Dorsolateral prefrontal cortex (tissue), 120 donors: ENCODE measurements at regions of chr11 and their contacts with region 1.

Region 1: GRCh38 chr11:123110356-123110755 is 48.4 kb upstream of the HSPA8 start:
- DNase-seq: no peak
- H3K4me3 ChIP-seq: no peak overlapping the region
- H3K27ac ChIP-seq: no peak overlapping the region
- H3K27me3 ChIP-seq: peaks cover 0 to 8% (median 0%) of the 10 kb centered on the region in 45 donors
- CTCF ChIP-seq: no peak

Region 2: DNA sequence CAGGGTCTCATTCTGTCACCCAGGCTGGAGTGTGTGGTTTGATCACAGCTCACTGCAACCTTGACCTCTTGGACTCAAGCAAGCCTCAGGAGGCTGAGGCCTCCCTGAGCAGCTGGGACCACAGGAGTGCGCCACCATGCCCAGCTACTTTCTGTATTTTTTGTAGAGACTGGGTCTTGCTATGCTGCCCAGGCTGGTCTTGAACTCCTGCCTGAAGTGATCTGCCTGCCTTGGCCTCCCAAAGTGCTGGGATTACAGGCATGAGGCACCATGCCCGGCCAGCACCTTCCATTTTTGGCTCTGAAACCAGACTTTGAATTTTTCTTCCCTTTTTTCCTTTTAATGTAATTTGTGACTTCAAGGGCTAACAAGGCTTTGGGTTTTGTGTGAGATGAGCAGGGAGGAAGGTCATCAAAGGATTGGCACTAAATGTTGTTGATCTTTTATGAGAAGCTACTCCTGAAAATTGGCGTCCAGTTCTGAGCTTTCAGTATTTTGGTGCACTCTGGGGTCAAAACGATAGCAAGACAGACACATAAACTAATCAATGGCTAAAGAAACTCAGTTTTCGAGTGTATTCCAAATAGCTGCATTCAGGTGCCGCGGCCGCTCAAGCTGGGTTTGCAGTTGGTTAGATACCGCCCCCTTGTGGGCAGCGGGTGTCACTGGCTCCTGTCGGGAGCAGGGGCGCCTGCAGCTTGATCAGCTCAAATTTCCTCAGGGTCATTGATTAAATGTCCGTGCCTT is 136.6 kb after region 1 on chr11:
- intact Hi-C with region 1: loop called (anchors 2 to 5 kb)
- DNase-seq: peak; percentile 71 to 89 (median 80)
- H3K4me3 ChIP-seq: peak overlapping the region in 8 of 59 donors; percentile 1 to 40 (median 17)
- H3K27ac ChIP-seq: no peak overlapping the region
- H3K27me3 ChIP-seq: peaks cover 0 to 8% (median 0%) of the 10 kb centered on the region in 45 donors
- CTCF ChIP-seq: peak; percentile 79 to 100 (median 98)

Region 3: DNA sequence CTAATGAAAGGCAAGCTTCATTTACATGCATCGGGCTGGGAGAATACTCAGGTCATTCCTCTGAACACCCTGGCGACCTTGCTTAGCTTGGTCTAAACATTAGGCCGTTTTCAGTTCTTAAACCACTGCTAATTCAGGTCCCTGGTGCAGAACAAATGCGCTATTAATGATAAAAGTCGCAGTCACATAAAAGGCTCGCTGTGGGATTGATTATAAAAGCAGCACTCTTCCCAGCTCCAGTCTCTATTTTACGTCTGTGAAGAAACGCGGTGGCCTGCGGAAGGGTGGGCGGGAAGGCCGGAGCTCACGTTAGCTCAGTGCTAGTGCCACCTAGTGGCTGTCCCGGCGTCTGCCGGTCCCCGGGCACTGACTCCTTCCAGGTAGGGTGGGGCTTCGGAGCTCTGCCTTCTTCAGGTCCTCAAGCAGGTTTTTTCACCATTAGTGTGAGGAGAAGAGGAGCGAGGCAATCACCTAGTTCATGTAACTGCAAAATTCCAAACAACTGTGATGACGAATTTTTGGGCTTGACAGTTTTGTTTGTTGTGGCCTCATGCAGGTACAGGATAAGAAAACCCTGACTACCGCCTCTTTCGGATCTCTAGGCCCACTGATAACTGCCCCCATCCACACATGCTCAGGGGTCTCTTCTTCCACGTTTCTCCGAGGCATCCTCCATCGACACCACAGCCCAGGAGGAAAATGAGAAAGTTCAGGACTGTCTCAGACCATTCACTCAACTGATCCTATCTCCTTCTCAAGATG is 151.2 kb after region 1 on chr11:
- intact Hi-C with region 1: loop called in 1 of 2 experiments (anchors 5 kb)
- DNase-seq: peak; percentile 66 to 94 (median 82)
- H3K4me3 ChIP-seq: peak overlapping the region in 47 of 59 donors; percentile 9 to 60 (median 38)
- H3K27ac ChIP-seq: peak overlapping the region in 12 of 59 donors; percentile 1 to 56 (median 20)
- H3K27me3 ChIP-seq: peaks cover 0 to 8% (median 0%) of the 10 kb centered on the region in 45 donors
- CTCF ChIP-seq: peak in 55 of 56 donors; percentile 70 to 95 (median 89)

Region 4: DNA sequence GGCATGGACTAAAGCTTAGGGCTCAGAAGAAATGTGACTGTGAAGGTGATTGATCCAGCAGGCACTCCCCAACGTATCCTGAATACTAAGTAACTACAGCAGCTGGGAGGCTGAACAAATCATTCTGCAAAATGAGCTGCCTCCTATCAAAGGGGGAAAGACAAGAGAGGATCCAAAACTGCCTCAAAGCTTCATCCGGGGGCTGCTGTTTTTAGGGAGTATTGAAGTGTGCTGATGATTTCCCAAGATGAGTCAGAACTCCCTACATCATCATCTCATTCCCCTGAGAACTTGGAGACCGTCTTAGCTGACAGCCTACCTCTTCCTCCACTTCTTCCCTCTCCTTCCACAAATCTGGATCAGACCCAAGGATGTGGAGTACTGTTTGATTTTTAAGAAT is 211.3 kb after region 1 on chr11:
- intact Hi-C with region 1: no loop called
- DNase-seq: no peak
- H3K4me3 ChIP-seq: no peak overlapping the region
- H3K27ac ChIP-seq: no peak overlapping the region
- H3K27me3 ChIP-seq: peaks cover 0 to 3% (median 0%) of the 10 kb centered on the region in 45 donors
- CTCF ChIP-seq: no peak